Activated naive CD4-positive, alpha-beta T cell treated with anti-CD3 and anti-CD28 coated beads for 36 hours (primary cell): ENCODE measurements at regions of chr2 and their contacts with region 1.

Region 1: DNA sequence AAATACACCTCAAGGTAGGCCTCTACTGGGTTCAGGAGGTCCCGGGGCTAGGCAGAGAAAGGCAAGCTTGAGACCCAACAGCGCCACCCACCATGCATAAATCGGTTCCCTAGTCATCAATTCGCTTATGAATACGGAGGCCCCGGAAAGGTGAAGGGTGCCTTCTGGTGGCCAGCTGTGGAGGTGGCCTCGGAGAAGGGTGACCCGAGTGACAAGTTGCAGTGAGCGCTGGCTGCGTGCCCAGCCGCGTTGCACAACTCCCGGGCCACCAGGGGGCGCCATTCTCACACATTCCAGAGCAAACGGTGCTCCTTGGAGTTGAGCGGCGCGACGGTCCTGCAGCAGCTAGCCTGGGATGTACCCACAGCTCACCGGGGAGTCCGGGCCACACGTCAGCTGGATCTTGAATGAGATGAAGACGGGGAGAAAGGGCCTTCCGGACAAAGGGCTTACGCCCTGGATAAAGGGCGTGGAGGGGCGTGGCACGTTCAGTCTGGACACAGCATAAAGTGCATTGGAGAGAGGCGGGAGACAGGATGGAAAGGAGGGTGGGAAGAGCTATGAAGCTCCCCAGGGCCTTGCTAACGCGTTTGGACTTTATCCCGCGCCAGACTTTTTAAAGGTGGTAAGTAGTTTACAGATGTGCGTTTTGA is 20.4 kb downstream of the TMSB10 start:
- DNase-seq: peak; percentile 100
- H3K4me3 Mint-ChIP-seq: peak overlapping the region; percentile 87
- H3K27ac Mint-ChIP-seq: peak overlapping the region; percentile 97
- H3K4me1 Mint-ChIP-seq: peaks cover 49% of the 10 kb centered on the region
- H3K27me3 Mint-ChIP-seq: no peaks in the 10 kb centered on the region

Region 2: GRCh38 chr2:84649487-84650142 is 276.2 kb before region 1 on chr2:
- CTCF ChIA-PET with region 1: interaction called, 7 read pairs
- intact Hi-C with region 1: loop called (anchors 2 kb)
- DNase-seq: no peak
- H3K4me3 Mint-ChIP-seq: peak overlapping the region; percentile 0
- H3K27ac Mint-ChIP-seq: peak overlapping the region; percentile 60
- H3K4me1 Mint-ChIP-seq: peaks cover 75% of the 10 kb centered on the region
- H3K27me3 Mint-ChIP-seq: no peaks in the 10 kb centered on the region

Region 3: GRCh38 chr2:84865181-84865783 is 60.6 kb before region 1 on chr2:
- CTCF ChIA-PET with region 1: interaction called, 19 read pairs
- intact Hi-C with region 1: loop called (anchors 1 kb)
- DNase-seq: peak; percentile 25
- H3K4me3 Mint-ChIP-seq: no peak overlapping the region
- H3K27ac Mint-ChIP-seq: peak overlapping the region; percentile 77
- H3K4me1 Mint-ChIP-seq: peaks cover 87% of the 10 kb centered on the region
- H3K27me3 Mint-ChIP-seq: no peaks in the 10 kb centered on the region

Region 4: DNA sequence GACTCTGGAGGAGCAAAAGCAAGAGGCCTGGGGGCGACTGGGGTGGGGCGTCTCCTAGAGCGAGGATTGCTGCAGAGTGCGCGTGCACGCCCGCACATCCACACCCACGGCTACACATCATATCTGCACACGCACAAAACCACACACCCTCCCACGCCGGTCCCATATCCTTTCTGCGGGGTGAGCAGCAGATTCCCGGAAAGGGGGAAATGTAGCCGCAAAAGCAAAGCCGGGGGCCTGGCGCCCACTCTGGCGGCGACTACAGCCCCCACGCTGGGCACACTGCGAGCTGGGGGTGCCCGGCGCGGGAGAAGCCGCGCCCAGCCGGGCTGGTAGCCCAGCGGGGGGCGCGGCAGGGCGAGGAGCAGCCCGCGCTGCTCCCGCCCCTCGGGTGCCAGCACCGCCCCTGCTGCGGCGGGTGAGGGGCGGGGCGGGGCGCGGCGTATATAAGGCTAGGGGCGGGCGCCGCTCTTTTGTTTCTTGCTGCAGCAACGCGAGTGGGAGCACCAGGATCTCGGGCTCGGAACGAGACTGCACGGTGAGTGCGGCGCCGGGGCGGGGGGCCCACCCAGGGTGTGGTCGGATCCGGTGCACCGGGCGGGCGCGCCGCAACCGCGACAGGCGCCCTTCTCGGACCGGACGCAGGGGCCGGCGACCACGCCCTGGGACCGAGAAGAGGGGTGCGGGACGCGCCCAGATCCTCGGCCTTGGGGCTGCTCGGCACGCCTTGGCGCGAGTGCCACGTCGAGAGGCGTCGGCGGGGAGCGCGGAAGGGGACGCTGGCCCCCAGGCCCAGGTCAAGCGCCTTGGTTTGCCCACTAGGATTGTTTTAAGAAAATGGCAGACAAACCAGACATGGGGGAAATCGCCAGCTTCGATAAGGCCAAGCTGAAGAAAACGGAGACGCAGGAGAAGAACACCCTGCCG is 20.4 kb before region 1 on chr2 and contains the start of gene TMSB10:
- CTCF ChIA-PET with region 1: interaction called, 43 read pairs
- intact Hi-C with region 1: loop called (anchors 1 kb)
- DNase-seq: peak; percentile 82
- H3K4me3 Mint-ChIP-seq: peak within 1 kb of the TSS; percentile 86
- H3K27ac Mint-ChIP-seq: peak within 1 kb of the TSS; percentile 92
- H3K4me1 Mint-ChIP-seq: peaks cover 43% of the 10 kb centered on the region
- H3K27me3 Mint-ChIP-seq: no peaks in the 10 kb centered on the region
- total RNA-seq, gene TMSB10: 1,772 to 1,864 TPM

Region 5: DNA sequence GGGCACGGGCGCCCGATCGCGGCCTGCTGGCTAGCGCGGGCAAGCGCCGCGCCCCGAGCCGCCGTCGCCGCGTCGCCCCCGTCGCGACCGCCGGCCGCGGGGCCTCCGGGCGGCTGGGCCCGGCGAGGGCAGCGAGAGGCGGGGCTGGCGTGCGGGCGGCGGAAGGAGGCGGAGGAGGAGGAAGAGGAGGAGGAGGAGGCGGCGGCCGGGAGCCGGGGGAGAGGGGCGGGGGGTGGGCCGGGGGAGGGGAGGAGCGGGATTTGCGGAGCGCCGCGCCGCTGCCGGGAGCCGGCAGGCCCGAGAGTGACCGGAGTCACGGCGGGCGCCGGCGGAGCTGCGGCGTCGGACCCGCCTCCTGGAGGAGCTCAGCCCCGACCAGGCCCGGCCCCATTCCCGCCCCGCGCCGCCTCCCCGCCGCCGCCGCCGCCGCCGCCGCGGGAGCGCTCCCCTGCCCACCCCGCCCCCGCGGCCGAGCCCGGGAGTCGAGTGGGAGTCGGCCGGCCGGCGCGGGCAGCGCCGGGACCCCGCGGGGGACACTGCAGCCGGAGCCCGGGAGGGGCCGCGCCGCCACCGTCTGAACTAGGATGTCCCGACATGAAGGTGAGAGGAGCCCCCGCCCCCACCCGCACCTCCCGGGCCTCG is 45.1 kb after region 1 on chr2 and contains the start of gene KCMF1:
- CTCF ChIA-PET with region 1: interaction called, 30 read pairs
- intact Hi-C with region 1: loop called (anchors 1 kb)
- DNase-seq: peak; percentile 80
- H3K4me3 Mint-ChIP-seq: peak within 1 kb of the TSS; percentile 98
- H3K27ac Mint-ChIP-seq: peak within 1 kb of the TSS; percentile 100
- H3K4me1 Mint-ChIP-seq: peaks cover 46% of the 10 kb centered on the region
- H3K27me3 Mint-ChIP-seq: no peaks in the 10 kb centered on the region
- total RNA-seq, gene KCMF1: 105 to 109 TPM

Region 6: GRCh38 chr2:85288244-85288725 is 362.4 kb after region 1 on chr2:
- CTCF ChIA-PET with region 1: interaction called, 25 read pairs
- intact Hi-C with region 1: loop called (anchors 1 kb)
- DNase-seq: no peak
- H3K4me3 Mint-ChIP-seq: no peak overlapping the region
- H3K27ac Mint-ChIP-seq: no peak overlapping the region
- H3K4me1 Mint-ChIP-seq: peaks cover 17% of the 10 kb centered on the region
- H3K27me3 Mint-ChIP-seq: no peaks in the 10 kb centered on the region